CD4-positive, alpha-beta memory T cell (primary cell): ENCODE measurements at regions of chr7 and their contacts with region 1.

Region 1: GRCh38 chr7:76314042-76314721 is 11.7 kb downstream of the HSPB1 start:
- DNase-seq: peak; percentile 92 to 94 (median 93)
- H3K4me3 ChIP-seq: no peak overlapping the region
- H3K4me3 Mint-ChIP-seq: peak overlapping the region in 4 of 8 donors; percentile 32 to 72 (median 54)
- H3K27ac ChIP-seq: no peak overlapping the region
- H3K27ac Mint-ChIP-seq: peak overlapping the region in 3 of 7 donors; percentile 41 to 86 (median 77)
- H3K4me1 ChIP-seq: peaks cover 20% of the 10 kb centered on the region
- H3K4me1 Mint-ChIP-seq: peaks cover 15 to 30% (median 21%) of the 10 kb centered on the region in 4 donors
- H3K27me3 ChIP-seq: no peaks in the 10 kb centered on the region
- H3K27me3 Mint-ChIP-seq: no peaks in the 10 kb centered on the region

Region 2: DNA sequence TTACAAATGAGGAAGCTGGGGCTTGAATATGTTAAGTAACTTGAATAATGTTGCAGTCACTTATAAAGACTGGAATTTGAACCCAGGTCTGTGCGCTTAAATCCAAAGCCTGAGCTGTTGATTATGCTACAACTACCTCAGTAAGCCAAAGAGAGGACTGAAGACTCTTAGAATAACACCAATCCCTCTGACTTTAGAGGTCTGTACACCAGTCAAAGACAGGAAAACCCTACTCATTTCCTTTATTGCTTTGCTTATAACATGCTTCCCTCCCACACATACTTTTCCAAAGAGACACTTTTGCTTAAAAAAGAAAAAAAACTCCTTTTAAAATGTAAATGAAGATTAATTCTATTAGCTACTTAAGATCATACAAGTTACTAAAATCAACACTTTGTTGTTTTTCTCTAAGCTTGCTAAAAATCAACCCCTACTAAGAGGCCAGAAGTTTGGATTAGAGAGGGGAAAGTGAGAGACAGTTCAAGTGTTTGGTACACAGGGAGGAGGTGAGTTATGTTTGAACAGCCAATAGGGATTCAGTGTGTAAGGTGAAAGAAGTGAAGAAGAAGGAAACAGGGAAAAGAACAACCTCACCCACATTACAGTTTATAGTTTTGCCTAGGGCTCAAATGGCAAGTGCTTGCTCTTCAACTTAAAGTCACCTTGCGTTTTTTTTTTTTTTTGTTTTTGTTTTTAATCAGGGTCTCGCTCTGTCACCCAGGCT is 191.5 kb before region 1 on chr7:
- CTCF ChIA-PET with region 1: no interaction called
- POLR2A ChIA-PET with region 1: no interaction called
- intact Hi-C with region 1: no loop called
- DNase-seq: no peak
- H3K4me3 ChIP-seq: no peak overlapping the region
- H3K4me3 Mint-ChIP-seq: no peak overlapping the region
- H3K27ac ChIP-seq: no peak overlapping the region
- H3K27ac Mint-ChIP-seq: no peak overlapping the region
- H3K4me1 ChIP-seq: no peaks in the 10 kb centered on the region
- H3K4me1 Mint-ChIP-seq: peaks cover 0 to 4% (median 0%) of the 10 kb centered on the region in 4 donors
- H3K27me3 ChIP-seq: no peaks in the 10 kb centered on the region
- H3K27me3 Mint-ChIP-seq: no peaks in the 10 kb centered on the region

Region 3: DNA sequence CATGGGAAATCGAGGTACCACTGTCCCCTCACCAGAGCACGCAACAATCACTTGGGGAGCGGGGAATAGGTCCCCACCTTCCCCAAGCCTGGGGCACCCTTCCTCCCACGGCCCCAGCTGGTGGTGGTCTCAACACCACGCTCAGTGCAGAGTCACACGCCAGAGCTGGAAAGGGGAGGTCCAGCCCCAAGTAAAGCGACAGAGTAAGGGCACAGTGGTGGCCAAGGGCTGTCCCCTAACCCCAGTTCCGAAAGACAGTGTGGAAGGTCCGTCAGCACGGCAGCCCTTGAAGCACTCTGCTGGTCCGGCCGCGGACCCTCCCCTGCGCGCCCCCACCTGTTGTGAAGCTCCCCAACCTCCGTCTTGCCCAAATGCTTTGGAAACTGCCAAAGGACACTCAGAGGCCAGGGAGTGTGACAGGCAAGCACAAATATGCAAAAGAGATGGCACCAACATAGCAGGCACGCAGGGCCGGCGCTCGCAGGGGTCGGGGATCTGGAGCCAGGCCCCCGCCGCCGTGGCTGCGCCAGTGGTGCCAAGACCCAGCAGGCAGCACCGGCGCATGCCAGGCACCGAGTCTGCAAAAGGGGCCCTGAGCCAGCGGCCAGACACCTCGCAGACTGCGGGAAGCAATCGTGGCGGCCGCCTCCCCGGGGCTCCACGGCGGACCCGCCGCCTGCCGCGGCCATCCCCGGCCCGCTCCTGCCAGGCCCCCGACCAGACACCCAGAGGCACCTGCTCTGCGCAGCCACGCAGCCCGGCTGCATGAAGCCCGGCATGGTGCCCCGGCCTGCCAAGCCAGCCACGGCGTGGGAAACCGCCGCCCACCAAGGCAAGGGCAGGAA is 164.1 kb before region 1 on chr7:
- CTCF ChIA-PET with region 1: no interaction called
- POLR2A ChIA-PET with region 1: no interaction called
- intact Hi-C with region 1: no loop called
- DNase-seq: no peak
- H3K4me3 ChIP-seq: no peak overlapping the region
- H3K4me3 Mint-ChIP-seq: peak overlapping the region in 1 of 8 donors; percentile 58
- H3K27ac ChIP-seq: no peak overlapping the region
- H3K27ac Mint-ChIP-seq: no peak overlapping the region
- H3K4me1 ChIP-seq: peaks cover 17% of the 10 kb centered on the region
- H3K4me1 Mint-ChIP-seq: peaks cover 13 to 20% (median 16%) of the 10 kb centered on the region in 4 donors
- H3K27me3 ChIP-seq: no peaks in the 10 kb centered on the region
- H3K27me3 Mint-ChIP-seq: peaks cover 4 to 7% of the 10 kb centered on the region in 2 donors

Region 4: DNA sequence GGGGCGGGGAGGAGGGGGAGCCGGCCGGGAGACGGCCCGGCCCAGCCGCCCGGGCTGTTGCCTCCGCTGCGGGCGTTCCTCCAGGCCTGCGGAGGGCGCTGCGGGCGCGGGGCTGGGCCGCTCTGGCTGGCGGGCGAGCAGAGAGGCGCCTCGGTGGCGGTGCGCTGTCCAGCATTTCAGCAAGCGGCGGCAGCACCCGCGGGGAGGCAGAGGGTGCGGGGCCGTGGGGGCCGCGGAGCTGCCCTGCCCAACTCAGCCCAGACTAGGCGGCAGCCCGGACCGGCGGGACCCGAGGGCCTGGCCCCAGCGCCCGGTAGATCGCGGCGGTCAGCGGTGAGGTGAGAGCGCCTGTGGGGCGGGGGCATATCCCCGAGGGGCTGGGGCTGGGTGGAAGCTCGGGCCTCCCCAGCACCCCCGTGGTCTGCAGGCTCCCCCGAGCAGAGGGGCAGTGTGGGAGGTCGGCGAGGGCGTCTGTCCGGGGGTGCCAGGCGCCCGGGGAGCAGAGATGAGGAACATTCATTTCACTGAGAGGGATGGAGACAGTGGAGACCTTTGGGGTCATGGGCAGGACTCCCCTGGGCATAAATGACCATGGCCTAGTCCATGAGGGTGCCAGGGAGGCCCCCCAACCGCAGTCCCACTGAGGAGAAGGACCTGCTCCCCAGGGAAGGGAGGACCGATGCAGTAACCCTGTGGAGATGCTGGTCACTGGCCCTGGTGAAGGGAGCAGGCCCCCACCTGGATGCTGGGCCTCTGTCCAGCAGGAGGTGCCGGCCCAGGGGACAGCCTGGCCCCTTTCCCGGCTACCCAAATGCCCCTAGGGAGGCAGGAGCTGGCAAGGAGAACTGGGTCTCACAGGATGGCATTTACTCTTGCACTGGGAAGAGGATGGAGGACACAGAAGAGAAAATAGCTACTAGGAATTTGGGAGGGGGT is 112.2 kb before region 1 on chr7 and contains the start of gene SRRM3:
- CTCF ChIA-PET with region 1: no interaction called
- POLR2A ChIA-PET with region 1: no interaction called
- intact Hi-C with region 1: loop called (anchors 1 kb)
- DNase-seq: peak; percentile 71 to 86 (median 81)
- H3K4me3 ChIP-seq: no peak within 1 kb of the TSS
- H3K4me3 Mint-ChIP-seq: no peak within 1 kb of the TSS
- H3K27ac ChIP-seq: no peak within 1 kb of the TSS
- H3K27ac Mint-ChIP-seq: no peak within 1 kb of the TSS
- H3K4me1 ChIP-seq: no peaks in the 10 kb centered on the region
- H3K4me1 Mint-ChIP-seq: no peaks in the 10 kb centered on the region
- H3K27me3 ChIP-seq: no peaks in the 10 kb centered on the region
- H3K27me3 Mint-ChIP-seq: peaks cover 18 to 21% of the 10 kb centered on the region in 2 donors
- total RNA-seq, gene SRRM3: not detected

Region 5: GRCh38 chr7:76291343-76292212 is 22.6 kb before region 1 on chr7:
- CTCF ChIA-PET with region 1: interaction called, 350 read pairs
- POLR2A ChIA-PET with region 1: interaction called, 7 read pairs
- intact Hi-C with region 1: loop called (anchors 1 kb)
- DNase-seq: peak; percentile 73 to 84 (median 79)
- H3K4me3 ChIP-seq: no peak overlapping the region
- H3K4me3 Mint-ChIP-seq: no peak overlapping the region
- H3K27ac ChIP-seq: no peak overlapping the region
- H3K27ac Mint-ChIP-seq: peak overlapping the region in 2 of 7 donors; percentile 34 to 72
- H3K4me1 ChIP-seq: peaks cover 7% of the 10 kb centered on the region
- H3K4me1 Mint-ChIP-seq: peaks cover 3 to 9% (median 6%) of the 10 kb centered on the region in 4 donors
- H3K27me3 ChIP-seq: no peaks in the 10 kb centered on the region
- H3K27me3 Mint-ChIP-seq: no peaks in the 10 kb centered on the region

Region 6: GRCh38 chr7:76327610-76328009 is 13.4 kb after region 1 on chr7:
- CTCF ChIA-PET with region 1: interaction called, 4 read pairs
- POLR2A ChIA-PET with region 1: interaction called, 13 read pairs
- intact Hi-C with region 1: no loop called
- DNase-seq: no peak
- H3K4me3 ChIP-seq: no peak overlapping the region
- H3K4me3 Mint-ChIP-seq: no peak overlapping the region
- H3K27ac ChIP-seq: no peak overlapping the region
- H3K27ac Mint-ChIP-seq: peak overlapping the region in 3 of 7 donors; percentile 59 to 70 (median 66)
- H3K4me1 ChIP-seq: peaks cover 7% of the 10 kb centered on the region
- H3K4me1 Mint-ChIP-seq: peaks cover 19 to 47% (median 35%) of the 10 kb centered on the region in 4 donors
- H3K27me3 ChIP-seq: no peaks in the 10 kb centered on the region
- H3K27me3 Mint-ChIP-seq: no peaks in the 10 kb centered on the region